ENCODE measurements at regions of chr14 and their contacts with region 1.

Region 1: DNA sequence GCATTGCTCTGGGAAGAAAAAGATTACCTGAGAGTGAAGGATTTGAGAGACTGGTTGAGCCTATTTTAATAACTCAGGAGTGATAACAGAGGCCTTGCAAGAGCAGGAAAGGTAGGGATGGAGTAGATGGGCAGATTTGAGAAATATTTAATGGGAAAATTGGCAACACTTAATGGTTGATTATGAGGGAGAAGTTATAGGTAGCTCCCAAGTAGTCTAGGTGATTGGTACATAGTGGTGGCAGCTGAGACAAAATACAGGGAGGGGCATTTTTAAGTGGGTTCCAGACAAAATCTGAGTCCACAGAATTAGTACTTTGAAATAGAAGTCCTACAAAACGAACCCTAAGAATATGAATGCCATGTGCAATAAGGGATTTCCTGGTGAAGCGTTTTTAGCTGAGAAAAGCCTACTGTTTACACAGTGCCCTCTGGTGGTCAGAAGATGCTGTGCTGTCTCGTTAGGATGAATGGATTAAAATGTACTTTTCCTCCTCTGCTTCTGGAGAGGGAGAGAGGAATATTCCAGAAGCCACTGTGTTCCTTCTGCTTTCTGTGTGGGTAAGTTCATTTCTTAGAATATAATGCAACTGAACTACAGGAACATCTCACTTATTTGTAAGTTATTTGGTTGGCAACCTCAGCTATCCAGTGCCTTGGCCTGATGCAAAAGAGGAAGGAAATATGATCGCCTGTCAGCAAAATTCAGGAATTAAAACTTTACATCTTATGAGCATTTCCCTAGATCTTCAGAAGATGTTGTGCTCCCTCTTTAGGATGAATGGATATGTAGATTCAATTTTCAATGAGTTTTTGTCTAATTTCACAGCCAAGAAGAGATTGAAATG is 6.5 kb downstream of the ZBTB1 start:
- DNase-seq: peak; percentile 83
- ATAC-seq: peak; percentile 56
- H3K4me3 ChIP-seq: no peak overlapping the region
- H3K4me3 Mint-ChIP-seq: peak overlapping the region; percentile 15
- H3K27ac ChIP-seq: peak overlapping the region; percentile 23 to 63
- H3K27ac Mint-ChIP-seq: peak overlapping the region; percentile 2
- H3K4me1 ChIP-seq: peaks cover 52 to 64% of the 10 kb centered on the region in 2 donors
- H3K4me1 Mint-ChIP-seq: peaks cover 78% of the 10 kb centered on the region
- H3K27me3 ChIP-seq: no peaks in the 10 kb centered on the region
- H3K27me3 Mint-ChIP-seq: no peaks in the 10 kb centered on the region
- CTCF ChIP-seq: peak; percentile 96

Region 2: DNA sequence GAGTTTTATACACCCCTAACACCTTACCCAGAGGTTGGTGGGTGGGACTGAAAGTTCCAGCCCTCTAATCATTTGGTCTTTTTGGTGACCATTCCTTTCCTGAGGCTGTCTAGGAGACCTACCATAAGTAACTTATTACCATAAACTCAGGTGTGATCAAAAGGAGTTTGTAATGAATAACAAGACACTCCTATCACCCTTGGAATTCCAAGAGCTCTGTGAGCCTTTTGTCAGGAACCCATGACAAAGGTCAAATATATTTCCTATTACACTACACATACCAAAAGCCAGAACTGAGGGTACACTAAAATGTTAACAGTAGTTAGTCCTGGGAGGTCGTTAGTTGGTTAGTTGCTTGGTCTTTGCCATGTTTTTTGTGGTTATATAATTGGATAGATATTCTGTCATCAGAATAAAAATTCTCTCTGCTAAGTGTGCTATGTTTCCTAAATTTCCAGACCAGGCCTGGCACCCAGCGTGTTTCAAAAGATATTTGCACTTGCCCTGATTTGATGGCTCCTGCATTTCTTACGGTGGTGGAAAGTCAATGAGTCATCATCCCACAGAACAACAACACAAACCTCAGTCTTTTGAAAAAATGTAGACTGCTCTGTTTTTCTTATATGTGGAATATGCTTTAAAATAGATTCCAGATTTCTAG is 72.7 kb before region 1 on chr14:
- CTCF ChIA-PET with region 1: interaction called, 63 read pairs
- POLR2A ChIA-PET with region 1: no interaction called
- intact Hi-C with region 1: no loop called
- DNase-seq: no peak
- ATAC-seq: no peak
- H3K4me3 ChIP-seq: no peak overlapping the region
- H3K4me3 Mint-ChIP-seq: no peak overlapping the region
- H3K27ac ChIP-seq: no peak overlapping the region
- H3K27ac Mint-ChIP-seq: no peak overlapping the region
- H3K4me1 ChIP-seq: peaks cover 0 to under 1% of the 10 kb centered on the region in 2 donors
- H3K4me1 Mint-ChIP-seq: peaks cover under 1% of the 10 kb centered on the region
- H3K27me3 ChIP-seq: no peaks in the 10 kb centered on the region
- H3K27me3 Mint-ChIP-seq: no peaks in the 10 kb centered on the region
- CTCF ChIP-seq: no peak

Region 3: GRCh38 chr14:64478634-64479250 is 32.3 kb before region 1 on chr14:
- CTCF ChIA-PET with region 1: interaction called, 92 read pairs
- POLR2A ChIA-PET with region 1: no interaction called
- intact Hi-C with region 1: loop called (anchors 1 kb)
- DNase-seq: peak; percentile 63
- ATAC-seq: no peak
- H3K4me3 ChIP-seq: no peak overlapping the region
- H3K4me3 Mint-ChIP-seq: no peak overlapping the region
- H3K27ac ChIP-seq: no peak overlapping the region
- H3K27ac Mint-ChIP-seq: no peak overlapping the region
- H3K4me1 ChIP-seq: no peaks in the 10 kb centered on the region
- H3K4me1 Mint-ChIP-seq: peaks cover 3% of the 10 kb centered on the region
- H3K27me3 ChIP-seq: no peaks in the 10 kb centered on the region
- H3K27me3 Mint-ChIP-seq: no peaks in the 10 kb centered on the region
- CTCF ChIP-seq: peak; percentile 85

Region 4: GRCh38 chr14:64488590-64489099 is 22.4 kb before region 1 on chr14:
- CTCF ChIA-PET with region 1: interaction called, 38 read pairs
- POLR2A ChIA-PET with region 1: no interaction called
- intact Hi-C with region 1: no loop called
- DNase-seq: no peak
- ATAC-seq: no peak
- H3K4me3 ChIP-seq: no peak overlapping the region
- H3K4me3 Mint-ChIP-seq: no peak overlapping the region
- H3K27ac ChIP-seq: no peak overlapping the region
- H3K27ac Mint-ChIP-seq: no peak overlapping the region
- H3K4me1 ChIP-seq: no peaks in the 10 kb centered on the region
- H3K4me1 Mint-ChIP-seq: peaks cover 6% of the 10 kb centered on the region
- H3K27me3 ChIP-seq: no peaks in the 10 kb centered on the region
- H3K27me3 Mint-ChIP-seq: no peaks in the 10 kb centered on the region
- CTCF ChIP-seq: no peak

Region 5: DNA sequence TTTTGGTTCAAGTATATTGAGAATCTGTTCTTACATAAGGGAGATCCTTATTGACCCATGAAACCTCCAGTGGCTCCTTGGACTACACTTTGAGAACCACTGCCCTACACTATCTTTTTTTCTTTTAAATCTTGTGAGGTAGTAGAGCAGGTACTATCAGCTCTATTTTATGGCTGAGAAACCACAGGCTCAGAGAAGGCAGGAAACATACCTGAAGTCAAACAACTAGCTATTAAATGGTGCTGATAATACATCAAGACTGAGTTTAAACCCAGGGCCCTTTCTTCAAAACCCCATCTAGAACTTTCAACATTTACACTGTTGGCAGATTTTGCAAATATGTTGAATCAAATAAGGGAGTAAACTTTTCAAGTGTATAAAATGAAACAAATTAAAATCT is 14.3 kb before region 1 on chr14:
- CTCF ChIA-PET with region 1: interaction called, 42 read pairs
- POLR2A ChIA-PET with region 1: interaction called, 3 read pairs
- intact Hi-C with region 1: no loop called
- DNase-seq: no peak
- ATAC-seq: no peak
- H3K4me3 ChIP-seq: no peak overlapping the region
- H3K4me3 Mint-ChIP-seq: no peak overlapping the region
- H3K27ac ChIP-seq: no peak overlapping the region
- H3K27ac Mint-ChIP-seq: no peak overlapping the region
- H3K4me1 ChIP-seq: peaks cover 22 to 23% of the 10 kb centered on the region in 2 donors
- H3K4me1 Mint-ChIP-seq: peaks cover 39% of the 10 kb centered on the region
- H3K27me3 ChIP-seq: no peaks in the 10 kb centered on the region
- H3K27me3 Mint-ChIP-seq: no peaks in the 10 kb centered on the region
- CTCF ChIP-seq: no peak

Region 6: GRCh38 chr14:64591809-64592208 is 80.8 kb after region 1 on chr14:
- CTCF ChIA-PET with region 1: no interaction called
- POLR2A ChIA-PET with region 1: no interaction called
- intact Hi-C with region 1: no loop called
- DNase-seq: no peak
- ATAC-seq: no peak
- H3K4me3 ChIP-seq: no peak overlapping the region
- H3K4me3 Mint-ChIP-seq: no peak overlapping the region
- H3K27ac ChIP-seq: no peak overlapping the region
- H3K27ac Mint-ChIP-seq: no peak overlapping the region
- H3K4me1 ChIP-seq: no peaks in the 10 kb centered on the region
- H3K4me1 Mint-ChIP-seq: no peaks in the 10 kb centered on the region
- H3K27me3 ChIP-seq: peaks cover 0 to 3% (median 0%) of the 10 kb centered on the region in 4 experiments
- H3K27me3 Mint-ChIP-seq: peaks cover 3% of the 10 kb centered on the region
- CTCF ChIP-seq: no peak

Region 7: GRCh38 chr14:64636208-64636979 is 125.3 kb after region 1 on chr14:
- CTCF ChIA-PET with region 1: no interaction called
- POLR2A ChIA-PET with region 1: no interaction called
- intact Hi-C with region 1: loop called (anchors 2 kb)
- DNase-seq: peak; percentile 77
- ATAC-seq: peak; percentile 95
- H3K4me3 ChIP-seq: no peak overlapping the region
- H3K4me3 Mint-ChIP-seq: no peak overlapping the region
- H3K27ac ChIP-seq: no peak overlapping the region
- H3K27ac Mint-ChIP-seq: no peak overlapping the region
- H3K4me1 ChIP-seq: peaks cover 5 to 20% of the 10 kb centered on the region in 2 donors
- H3K4me1 Mint-ChIP-seq: peaks cover 11% of the 10 kb centered on the region
- H3K27me3 ChIP-seq: peaks cover 0 to 4% (median 0%) of the 10 kb centered on the region in 4 experiments
- H3K27me3 Mint-ChIP-seq: peaks cover 8% of the 10 kb centered on the region
- CTCF ChIP-seq: peak; percentile 96